ENCODE measurements at regions of chr3 and their contacts with region 1.

Region 1: GRCh38 chr3:59424268-59425010 is 374.6 kb upstream of the CFAP20DC start:
- DNase-seq: peak; percentile 66
- ATAC-seq: no peak
- H3K4me3 ChIP-seq: no peak overlapping the region
- H3K27ac ChIP-seq: peak overlapping the region; percentile 64; the same call in 1 of the 2 replicates
- H3K4me1 ChIP-seq: peaks cover 48% of the 10 kb centered on the region
- H3K27me3 ChIP-seq: no peaks in the 10 kb centered on the region
- CTCF ChIP-seq: no peak

Region 2: GRCh38 chr3:58271901-58272501 is 1152.4 kb before region 1 on chr3:
- CTCF ChIA-PET with region 1: interaction called, 18 read pairs
- POLR2A ChIA-PET with region 1: no interaction called
- intact Hi-C with region 1: no loop called
- DNase-seq: peak; percentile 82
- ATAC-seq: peak; percentile 100
- H3K4me3 ChIP-seq: peak overlapping the region; percentile 37; the same call in 1 of the 2 replicates
- H3K27ac ChIP-seq: peak overlapping the region; percentile 79
- H3K4me1 ChIP-seq: peaks cover 14% of the 10 kb centered on the region
- H3K27me3 ChIP-seq: no peaks in the 10 kb centered on the region
- CTCF ChIP-seq: no peak

Region 3: GRCh38 chr3:59514865-59515482 is 90.5 kb after region 1 on chr3:
- CTCF ChIA-PET with region 1: no interaction called
- POLR2A ChIA-PET with region 1: no interaction called
- intact Hi-C with region 1: loop called (anchors 5 kb)
- DNase-seq: no peak
- ATAC-seq: no peak
- H3K4me3 ChIP-seq: no peak overlapping the region
- H3K27ac ChIP-seq: no peak overlapping the region
- H3K4me1 ChIP-seq: 0 out of 2 replicates have a peak, but pooled peaks cover 5% of the 10 kb centered on the region
- H3K27me3 ChIP-seq: no peaks in the 10 kb centered on the region
- CTCF ChIP-seq: no peak